ENCODE measurements at regions of chr12 and their contacts with region 1.

Region 1: DNA sequence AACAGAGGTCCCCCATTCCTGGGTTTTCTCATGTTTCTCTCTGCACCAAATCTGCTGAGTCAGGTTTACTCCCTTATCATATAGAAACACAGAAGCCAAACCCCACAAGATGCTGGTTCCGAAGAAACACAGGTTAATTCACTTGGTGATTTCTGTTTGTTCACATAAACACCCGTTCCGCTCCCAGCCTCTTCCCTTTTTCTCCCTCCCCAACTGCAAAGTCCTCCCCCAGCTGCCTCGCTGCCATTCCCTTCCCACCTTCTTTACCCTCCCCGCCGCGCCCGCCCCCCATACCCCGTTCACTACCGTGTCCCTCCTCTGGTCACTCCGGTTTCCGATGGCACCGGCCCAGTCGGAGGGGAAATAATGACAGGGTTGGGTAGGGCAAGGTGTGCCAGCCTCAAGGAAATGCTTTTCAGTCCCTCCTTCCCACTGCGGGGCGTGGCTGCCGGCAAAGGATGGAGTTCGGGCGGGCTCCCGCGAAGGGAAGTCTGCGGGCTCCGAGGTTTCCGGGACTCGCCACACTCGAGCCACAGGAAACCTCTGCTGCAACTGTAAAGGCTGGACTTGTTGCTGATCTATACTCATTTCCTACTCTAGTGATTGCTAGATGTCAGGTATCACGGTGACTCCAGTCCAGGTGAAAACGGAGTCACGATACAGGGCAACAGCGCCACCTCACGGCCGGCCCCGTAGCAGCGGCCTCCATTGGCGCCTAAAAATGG is at the start of gene STYK1:
- DNase-seq: peak; percentile 84
- ATAC-seq: peak; percentile 89
- H3K4me3 Mint-ChIP-seq: peak within 1 kb of the TSS; percentile 70
- H3K27ac Mint-ChIP-seq: peak within 1 kb of the TSS; percentile 77
- H3K4me1 Mint-ChIP-seq: peaks cover 28% of the 10 kb centered on the region
- H3K27me3 Mint-ChIP-seq: peaks cover 56% of the 10 kb centered on the region
- total RNA-seq, gene STYK1: not detected

Region 2: DNA sequence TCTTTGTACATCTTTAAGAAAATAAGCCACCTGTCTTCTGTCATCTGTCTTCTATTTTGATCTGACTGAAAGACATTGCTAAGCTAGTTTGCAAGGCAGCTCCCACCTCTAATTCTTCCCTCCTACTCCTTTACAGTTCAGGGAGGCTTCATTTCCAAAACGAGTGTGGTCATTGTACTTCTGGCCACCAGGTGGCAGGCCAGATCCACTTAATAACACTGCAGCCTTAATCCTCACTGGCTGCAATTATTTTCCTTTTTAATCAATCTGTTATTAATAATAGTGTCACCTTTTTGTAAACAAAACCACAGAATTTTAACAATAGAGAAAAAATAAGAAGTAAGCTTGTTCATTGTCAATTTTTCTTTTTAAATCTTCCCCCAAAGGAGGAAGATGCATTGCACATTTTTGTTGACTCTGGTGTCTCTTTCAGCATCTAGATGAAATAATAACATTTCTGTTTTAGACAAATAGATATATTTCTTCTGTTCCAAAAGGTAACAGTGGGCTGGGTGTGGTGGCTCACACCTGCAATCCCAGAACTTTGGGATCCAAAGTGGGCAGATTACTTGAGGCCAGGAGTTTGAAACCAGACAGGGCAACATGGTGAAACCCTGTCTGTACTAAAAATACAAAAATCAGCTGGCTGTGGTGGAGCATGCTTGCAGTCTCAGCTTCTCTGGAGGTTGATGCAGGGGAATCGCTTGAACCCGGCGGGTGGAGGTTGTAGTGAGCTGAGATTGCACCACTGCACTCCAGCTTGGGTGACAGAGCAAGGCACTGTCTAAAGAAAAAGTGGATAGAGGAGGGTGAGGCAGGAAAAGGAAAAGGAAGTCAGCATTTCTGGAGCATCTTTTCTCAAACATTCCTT is 437.8 kb before region 1 on chr12:
- CTCF ChIA-PET with region 1: interaction called, 4 read pairs
- POLR2A ChIA-PET with region 1: no interaction called
- intact Hi-C with region 1: loop called (anchors 2 kb)
- DNase-seq: peak; percentile 57
- ATAC-seq: no peak
- H3K4me3 Mint-ChIP-seq: no peak overlapping the region
- H3K27ac Mint-ChIP-seq: no peak overlapping the region
- H3K4me1 Mint-ChIP-seq: no peaks in the 10 kb centered on the region
- H3K27me3 Mint-ChIP-seq: peaks cover 11% of the 10 kb centered on the region

Region 3: DNA sequence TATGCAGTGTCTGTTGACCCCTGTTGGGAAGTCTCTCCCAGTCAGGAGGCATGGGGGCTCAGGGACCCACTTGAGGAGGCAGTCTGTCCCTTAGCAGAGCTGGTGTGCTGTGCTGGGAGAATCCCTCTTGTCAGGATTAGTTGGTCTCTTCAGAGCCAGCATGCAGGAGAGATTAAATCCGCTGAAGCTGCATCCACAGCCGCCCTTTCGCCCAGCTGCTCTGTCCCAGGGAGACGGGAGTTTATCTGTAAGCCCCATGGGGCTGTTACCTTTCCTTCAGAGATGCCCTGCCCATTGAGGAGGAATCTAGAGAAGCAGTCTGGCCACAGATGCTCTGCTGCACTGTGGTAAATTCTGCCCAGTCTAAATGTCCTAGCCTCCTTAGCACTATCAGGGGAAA is 207.5 kb before region 1 on chr12:
- CTCF ChIA-PET with region 1: no interaction called
- POLR2A ChIA-PET with region 1: no interaction called
- intact Hi-C with region 1: no loop called
- DNase-seq: no peak
- ATAC-seq: no peak
- H3K4me3 Mint-ChIP-seq: no peak overlapping the region
- H3K27ac Mint-ChIP-seq: no peak overlapping the region
- H3K4me1 Mint-ChIP-seq: no peaks in the 10 kb centered on the region
- H3K27me3 Mint-ChIP-seq: peaks cover 27% of the 10 kb centered on the region

Region 4: GRCh38 chr12:10540776-10541205 is 133.0 kb before region 1 on chr12:
- CTCF ChIA-PET with region 1: interaction called, 3 read pairs
- POLR2A ChIA-PET with region 1: no interaction called
- intact Hi-C with region 1: loop called in 1 of 2 experiments (anchors 1 kb)
- DNase-seq: no peak
- ATAC-seq: peak; percentile 95
- H3K4me3 Mint-ChIP-seq: no peak overlapping the region
- H3K27ac Mint-ChIP-seq: peak overlapping the region; percentile 26
- H3K4me1 Mint-ChIP-seq: peaks cover 13% of the 10 kb centered on the region
- H3K27me3 Mint-ChIP-seq: peaks cover 42% of the 10 kb centered on the region

Region 5: DNA sequence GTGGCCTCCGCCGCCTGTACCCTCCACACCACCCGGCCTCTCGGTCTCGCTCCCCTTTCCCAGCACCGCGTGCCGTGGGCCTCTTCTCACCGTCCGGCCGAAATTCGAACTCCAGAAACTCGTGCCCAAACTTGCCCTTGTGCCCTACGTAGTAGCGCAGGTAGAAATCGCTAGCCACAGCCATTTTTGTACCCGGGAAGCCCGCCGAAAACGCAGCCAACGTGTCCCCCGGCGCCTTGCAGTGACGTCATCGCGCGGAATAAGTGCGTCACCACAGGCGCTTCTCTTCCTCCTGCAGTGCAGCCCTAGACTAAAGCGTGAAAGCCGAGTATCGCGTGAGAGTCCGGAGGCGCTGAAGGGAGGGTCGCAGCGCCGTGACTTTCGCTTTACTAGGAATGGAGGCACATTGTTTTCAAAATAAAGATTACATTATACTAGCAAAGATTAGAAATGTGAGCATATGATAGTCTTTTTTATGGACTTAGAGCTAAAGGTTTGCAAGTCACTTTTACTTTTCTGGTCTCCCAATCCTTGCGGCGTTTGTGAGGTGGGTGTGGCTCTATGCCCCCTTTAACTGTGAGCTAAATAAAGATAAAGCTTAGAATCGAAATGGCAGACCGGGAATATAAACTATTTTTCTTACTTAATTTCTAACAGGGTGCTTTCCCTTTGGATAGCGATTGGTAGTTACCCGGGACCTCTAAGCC is 60.3 kb before region 1 on chr12 and contains the start of gene MAGOHB:
- CTCF ChIA-PET with region 1: interaction called, 3 read pairs
- POLR2A ChIA-PET with region 1: no interaction called
- intact Hi-C with region 1: loop called (anchors 1 to 2 kb)
- DNase-seq: peak; percentile 99
- ATAC-seq: peak; percentile 96
- H3K4me3 Mint-ChIP-seq: peak within 1 kb of the TSS; percentile 99
- H3K27ac Mint-ChIP-seq: peak within 1 kb of the TSS; percentile 100
- H3K4me1 Mint-ChIP-seq: peaks cover 25% of the 10 kb centered on the region
- H3K27me3 Mint-ChIP-seq: peaks cover 6% of the 10 kb centered on the region
- total RNA-seq, gene MAGOHB: 66.3 to 89.3 TPM

Region 6: DNA sequence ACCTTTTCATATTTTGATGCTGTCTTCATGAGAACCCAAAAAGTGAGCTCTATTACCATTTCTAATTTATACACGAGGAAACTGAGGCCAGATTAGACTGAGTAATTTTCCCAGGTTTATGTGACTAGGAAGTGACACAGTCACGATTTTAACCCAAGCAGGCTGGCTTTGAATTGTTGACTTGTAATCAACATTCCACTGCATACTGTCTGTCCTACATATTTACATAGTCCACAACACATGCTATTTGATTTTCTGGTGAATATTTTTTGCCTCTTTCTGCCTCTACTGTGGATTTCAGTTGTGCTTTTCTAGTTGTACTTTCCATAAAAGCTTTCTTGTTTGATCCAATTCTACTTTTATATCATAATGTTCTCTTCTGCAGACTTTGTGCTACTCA is 120.4 kb after region 1 on chr12:
- CTCF ChIA-PET with region 1: no interaction called
- POLR2A ChIA-PET with region 1: no interaction called
- intact Hi-C with region 1: no loop called
- DNase-seq: no peak
- ATAC-seq: no peak
- H3K4me3 Mint-ChIP-seq: no peak overlapping the region
- H3K27ac Mint-ChIP-seq: no peak overlapping the region
- H3K4me1 Mint-ChIP-seq: no peaks in the 10 kb centered on the region
- H3K27me3 Mint-ChIP-seq: peaks cover 4% of the 10 kb centered on the region

Measured in activated CD4-positive, alpha-beta T cell treated with anti-CD3 and anti-CD28 coated beads for 36 hours (primary cell).